ENCODE measurements at regions of chr2 and their contacts with region 1.

Region 1: GRCh38 chr2:183696028-183696427 is 571.8 kb downstream of the NUP35 start:
- DNase-seq: no peak
- ATAC-seq: no peak
- H3K4me3 ChIP-seq: no peak overlapping the region
- H3K27ac ChIP-seq: no peak overlapping the region
- H3K4me1 ChIP-seq: no peaks in the 10 kb centered on the region
- H3K27me3 ChIP-seq: no peaks in the 10 kb centered on the region
- CTCF ChIP-seq: no peak
- POLR2A ChIP-seq: no peak

Region 2: GRCh38 chr2:183248866-183249567 is 447.0 kb before region 1 on chr2:
- intact Hi-C with region 1: loop called in 4 of 10 experiments (anchors 5 to 10 kb)
- DNase-seq: no peak
- ATAC-seq: no peak
- H3K4me3 ChIP-seq: no peak overlapping the region
- H3K27ac ChIP-seq: no peak overlapping the region
- H3K4me1 ChIP-seq: no peaks in the 10 kb centered on the region
- H3K27me3 ChIP-seq: no peaks in the 10 kb centered on the region
- CTCF ChIP-seq: peak; percentile 32 to 61 (median 47)
- POLR2A ChIP-seq: no peak

Region 3: DNA sequence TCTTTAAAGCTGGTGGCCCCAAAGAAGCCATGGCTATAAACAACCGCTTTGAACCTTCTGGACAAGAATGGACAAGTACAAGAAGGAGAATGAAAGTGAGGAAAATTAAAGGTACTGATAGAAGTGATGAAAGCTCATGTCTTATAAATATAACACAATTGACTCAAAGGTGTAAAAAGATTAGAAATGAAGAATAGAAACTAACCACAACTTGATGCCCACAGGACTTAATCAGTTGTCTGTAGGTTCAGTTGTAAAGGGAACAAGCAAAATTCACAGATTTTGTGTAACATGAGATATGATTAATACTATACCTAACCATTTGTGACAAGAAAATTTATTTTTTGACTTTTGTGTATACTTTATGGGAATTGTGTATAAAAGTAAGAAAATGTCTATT is 436.1 kb before region 1 on chr2:
- intact Hi-C with region 1: loop called in 1 of 10 experiments (anchors 10 kb)
- DNase-seq: no peak
- ATAC-seq: no peak
- H3K4me3 ChIP-seq: no peak overlapping the region
- H3K27ac ChIP-seq: no peak overlapping the region
- H3K4me1 ChIP-seq: no peaks in the 10 kb centered on the region
- H3K27me3 ChIP-seq: no peaks in the 10 kb centered on the region
- CTCF ChIP-seq: no peak
- POLR2A ChIP-seq: no peak

Region 4: DNA sequence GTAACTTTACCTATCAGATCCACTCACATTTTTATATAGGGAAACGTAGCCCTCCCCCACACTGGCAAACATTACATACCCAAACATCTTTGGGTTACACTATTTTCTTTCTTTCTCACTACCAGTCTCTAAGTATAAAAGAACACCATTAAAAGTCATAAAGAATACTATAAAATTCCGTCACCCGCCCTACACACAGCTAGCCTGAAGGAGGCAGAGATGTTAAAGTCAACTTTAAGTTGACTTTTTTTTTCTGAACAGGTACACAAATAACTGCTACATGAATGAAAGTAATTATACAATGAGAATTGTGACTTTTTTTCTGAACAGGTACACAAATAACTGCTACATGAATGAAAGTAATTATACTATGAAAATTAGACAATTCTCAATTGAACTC is 56.5 kb after region 1 on chr2:
- intact Hi-C with region 1: no loop called
- DNase-seq: no peak
- ATAC-seq: no peak
- H3K4me3 ChIP-seq: no peak overlapping the region
- H3K27ac ChIP-seq: no peak overlapping the region
- H3K4me1 ChIP-seq: no peaks in the 10 kb centered on the region
- H3K27me3 ChIP-seq: no peaks in the 10 kb centered on the region
- CTCF ChIP-seq: no peak
- POLR2A ChIP-seq: no peak